ENCODE measurements at regions of chr2 and their contacts with region 1.

Region 1: DNA sequence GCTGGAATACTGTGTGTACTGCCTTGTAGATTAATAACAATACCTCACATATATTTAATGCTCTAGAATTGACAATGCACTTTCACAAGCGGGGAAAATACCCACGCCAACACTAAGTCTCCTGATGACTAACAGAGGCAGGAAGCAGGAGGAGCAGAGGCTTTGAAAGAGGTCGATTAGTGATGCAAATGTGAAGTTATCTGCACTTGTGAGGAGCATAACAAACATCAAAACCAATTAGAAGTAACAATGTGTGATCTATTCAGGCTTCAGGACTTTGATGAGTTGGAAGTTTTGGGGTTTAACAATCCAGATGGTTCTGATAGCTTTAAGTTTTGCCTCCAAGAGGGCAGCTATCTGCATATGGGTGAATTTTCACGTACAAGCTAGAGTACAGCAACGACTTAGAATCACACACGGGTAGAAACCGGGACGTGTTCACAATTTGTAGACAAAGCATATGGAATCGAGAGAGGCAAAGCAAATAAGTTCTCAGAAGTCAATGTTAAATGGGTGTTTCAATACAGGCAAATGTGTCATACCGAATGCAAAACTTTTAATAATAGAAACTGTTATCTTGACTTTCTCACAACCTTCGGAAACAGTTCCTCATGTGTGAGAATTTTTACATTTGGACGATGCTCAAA is 114.5 kb downstream of the METTL8 start:
- DNase-seq: peak; percentile 85
- H3K4me3 Mint-ChIP-seq: peak overlapping the region; percentile 55
- H3K27ac Mint-ChIP-seq: peak overlapping the region; percentile 99
- H3K4me1 Mint-ChIP-seq: peaks cover 54% of the 10 kb centered on the region
- H3K27me3 Mint-ChIP-seq: no peaks in the 10 kb centered on the region

Region 2: GRCh38 chr2:170973492-170974303 is 345.6 kb before region 1 on chr2:
- CTCF ChIA-PET with region 1: no interaction called
- intact Hi-C with region 1: loop called (anchors 1 kb)
- DNase-seq: peak; percentile 92
- H3K4me3 Mint-ChIP-seq: peak overlapping the region; percentile 66
- H3K27ac Mint-ChIP-seq: peak overlapping the region; percentile 48
- H3K4me1 Mint-ChIP-seq: peaks cover 9% of the 10 kb centered on the region
- H3K27me3 Mint-ChIP-seq: no peaks in the 10 kb centered on the region

Region 3: GRCh38 chr2:171136024-171136423 is 183.3 kb before region 1 on chr2:
- CTCF ChIA-PET with region 1: interaction called, 3 read pairs
- intact Hi-C with region 1: loop called (anchors 1 kb)
- DNase-seq: peak; percentile 34
- H3K4me3 Mint-ChIP-seq: no peak overlapping the region
- H3K27ac Mint-ChIP-seq: peak overlapping the region; percentile 47
- H3K4me1 Mint-ChIP-seq: peaks cover 68% of the 10 kb centered on the region
- H3K27me3 Mint-ChIP-seq: no peaks in the 10 kb centered on the region

Region 4: GRCh38 chr2:171225302-171225980 is 93.8 kb before region 1 on chr2:
- CTCF ChIA-PET with region 1: no interaction called
- intact Hi-C with region 1: no loop called
- DNase-seq: no peak
- H3K4me3 Mint-ChIP-seq: no peak overlapping the region
- H3K27ac Mint-ChIP-seq: no peak overlapping the region
- H3K4me1 Mint-ChIP-seq: peaks cover 13% of the 10 kb centered on the region
- H3K27me3 Mint-ChIP-seq: no peaks in the 10 kb centered on the region

Region 5: DNA sequence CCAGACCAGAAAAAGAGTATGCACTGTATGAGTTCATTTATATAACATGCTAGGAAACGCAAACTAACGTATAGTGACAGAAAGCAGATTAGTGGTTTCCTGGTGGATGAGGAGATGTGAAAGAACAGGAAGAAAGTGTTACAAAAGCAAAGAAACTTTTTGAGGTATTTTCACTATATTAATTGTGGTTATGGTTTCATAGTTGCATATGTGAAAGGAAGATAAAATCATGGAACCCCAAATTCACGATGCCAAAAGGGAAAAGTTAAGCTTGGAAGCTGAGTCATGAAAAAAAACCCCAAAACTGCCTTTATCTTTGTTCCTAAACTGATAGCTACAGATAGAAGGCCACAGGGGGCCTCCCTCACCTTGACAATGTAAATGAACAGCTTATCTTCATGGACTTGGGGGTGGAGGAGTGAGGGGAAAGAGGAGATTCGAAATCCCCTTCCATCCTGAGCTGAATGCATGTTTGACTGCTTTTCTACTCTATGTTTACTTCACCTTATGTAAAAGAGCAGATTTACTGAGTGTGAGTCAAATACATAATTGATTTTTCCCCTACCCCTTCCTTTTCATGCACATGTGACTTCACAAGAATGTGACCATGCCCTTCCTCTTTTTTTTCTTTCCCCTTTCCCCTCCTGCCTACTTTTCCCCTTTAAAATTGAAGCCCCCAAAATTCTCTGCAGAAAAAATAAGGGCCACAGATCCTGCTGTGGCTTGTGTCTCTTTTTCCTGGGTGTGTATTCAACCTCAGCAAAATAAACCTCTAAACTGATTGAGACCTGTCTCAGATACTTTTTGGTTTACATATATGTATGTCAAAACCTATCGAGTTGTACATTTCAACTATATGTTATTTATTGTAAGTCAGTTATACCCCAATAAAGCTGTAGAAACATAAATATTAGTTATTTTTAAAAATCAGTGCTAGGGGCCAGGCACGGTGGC is 58.5 kb before region 1 on chr2:
- CTCF ChIA-PET with region 1: interaction called, 5 read pairs
- intact Hi-C with region 1: loop called (anchors 1 kb)
- DNase-seq: peak; percentile 70
- H3K4me3 Mint-ChIP-seq: no peak overlapping the region
- H3K27ac Mint-ChIP-seq: peak overlapping the region; percentile 44
- H3K4me1 Mint-ChIP-seq: peaks cover 35% of the 10 kb centered on the region
- H3K27me3 Mint-ChIP-seq: no peaks in the 10 kb centered on the region

Region 6: DNA sequence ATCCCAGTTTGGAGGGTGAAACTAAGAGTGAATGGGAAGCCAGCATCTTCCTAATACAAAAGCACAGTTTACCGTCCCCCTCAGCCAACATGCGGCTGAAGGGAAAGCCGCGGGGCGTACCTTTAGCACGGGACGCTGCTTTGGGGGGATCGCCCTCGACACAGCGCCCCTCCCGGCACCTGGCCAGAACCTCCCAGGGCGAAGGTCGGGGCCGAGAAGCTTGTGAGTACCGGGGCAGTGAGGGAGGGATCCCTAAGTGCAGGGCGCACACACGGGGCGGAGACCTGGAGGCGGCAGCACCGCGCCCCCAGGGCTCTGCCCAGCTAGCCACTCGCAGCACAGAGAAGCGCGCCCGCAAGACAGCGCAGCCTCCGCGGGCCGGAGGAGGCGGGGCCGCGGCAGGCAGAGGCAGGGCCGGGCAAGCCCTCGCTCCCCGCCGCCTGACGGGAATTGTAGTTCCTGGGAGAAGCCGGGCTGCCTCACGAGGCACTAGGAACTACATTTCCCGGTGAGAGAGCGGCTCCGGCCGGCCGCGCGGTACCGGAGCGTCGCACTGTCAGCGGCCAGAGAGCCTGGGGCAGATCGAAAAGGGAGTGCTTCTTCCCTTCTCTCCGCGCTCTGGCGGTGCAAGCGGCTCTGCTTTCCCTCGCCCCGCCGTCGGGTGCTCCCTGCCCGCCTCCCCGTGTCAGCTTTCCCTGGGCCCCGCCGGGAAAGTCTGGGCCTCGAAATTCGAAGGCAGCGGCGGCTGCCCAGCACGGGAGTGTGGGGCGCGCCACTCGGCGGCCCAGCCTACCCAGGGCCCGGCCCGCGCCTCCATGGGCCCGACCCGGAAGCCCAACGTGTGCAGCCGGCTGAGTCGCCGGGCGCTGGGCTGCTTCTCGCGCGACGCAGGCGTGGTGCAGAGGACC is 114.7 kb after region 1 on chr2 and contains the starts of genes DCAF17 and METTL8:
- CTCF ChIA-PET with region 1: interaction called, 3 read pairs
- intact Hi-C with region 1: loop called (anchors 1 kb)
- DNase-seq: peak; percentile 96
- H3K4me3 Mint-ChIP-seq: peak within 1 kb of the TSS; percentile 86
- H3K27ac Mint-ChIP-seq: peak within 1 kb of the TSS; percentile 94
- H3K4me1 Mint-ChIP-seq: peaks cover 54% of the 10 kb centered on the region
- H3K27me3 Mint-ChIP-seq: no peaks in the 10 kb centered on the region
- total RNA-seq, gene DCAF17: 21.1 to 21.3 TPM
- total RNA-seq, gene METTL8: 32.9 to 34.5 TPM

Region 7: DNA sequence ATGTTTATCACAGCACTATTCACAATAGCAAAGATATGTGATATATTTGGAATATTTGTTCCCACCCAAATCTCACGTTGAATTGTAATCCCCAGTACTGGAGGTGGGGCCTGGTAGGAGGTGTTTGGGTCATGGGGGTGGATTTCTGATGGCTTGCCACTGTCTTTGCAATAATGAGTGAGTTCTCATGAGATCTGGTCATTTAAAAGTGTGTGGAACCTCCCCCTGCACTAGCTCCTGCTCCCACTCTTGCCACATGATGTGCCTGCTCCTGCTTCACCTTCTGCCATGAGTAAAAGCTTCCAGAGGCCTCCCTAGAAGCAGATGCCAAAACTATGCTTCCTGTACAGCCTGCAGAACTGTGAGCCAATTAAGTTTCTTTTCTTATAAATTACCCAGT is 295.8 kb after region 1 on chr2:
- CTCF ChIA-PET with region 1: no interaction called
- intact Hi-C with region 1: no loop called
- DNase-seq: no peak
- H3K4me3 Mint-ChIP-seq: no peak overlapping the region
- H3K27ac Mint-ChIP-seq: no peak overlapping the region
- H3K4me1 Mint-ChIP-seq: no peaks in the 10 kb centered on the region
- H3K27me3 Mint-ChIP-seq: no peaks in the 10 kb centered on the region

Region 8: GRCh38 chr2:172442072-172442895 is 1123.0 kb after region 1 on chr2:
- CTCF ChIA-PET with region 1: no interaction called
- intact Hi-C with region 1: loop called (anchors 10 kb)
- DNase-seq: peak; percentile 87
- H3K4me3 Mint-ChIP-seq: peak overlapping the region; percentile 58
- H3K27ac Mint-ChIP-seq: no peak overlapping the region
- H3K4me1 Mint-ChIP-seq: peaks cover 69% of the 10 kb centered on the region
- H3K27me3 Mint-ChIP-seq: no peaks in the 10 kb centered on the region

Measured in activated naive CD4-positive, alpha-beta T cell treated with anti-CD3 and anti-CD28 coated beads for 36 hours (primary cell).